GM12878 (cell line): ENCODE measurements at regions of chr2 and their contacts with region 1.

Region 1: GRCh38 chr2:196182439-196183171 is 11.2 kb upstream of the STK17B start:
- DNase-seq: peak; percentile 71
- ATAC-seq: peak; percentile 87
- H3K4me3 ChIP-seq: no peak overlapping the region
- H3K27ac ChIP-seq: peak overlapping the region; percentile 42
- H3K4me1 ChIP-seq: peaks cover 27% of the 10 kb centered on the region
- H3K27me3 ChIP-seq: no peaks in the 10 kb centered on the region
- CTCF ChIP-seq: no peak
- EP300 ChIP-seq: peak; percentile 31 to 64
- POLR2A ChIP-seq: no peak
- RAD21 ChIP-seq: no peak

Region 2: GRCh38 chr2:196205881-196206435 is 23.4 kb after region 1 on chr2:
- CTCF ChIA-PET with region 1: interaction called, 13 read pairs
- POLR2A ChIA-PET with region 1: interaction called, 22 read pairs
- RAD21 ChIA-PET with region 1: interaction called, 39 read pairs
- SMC1A ChIA-PET with region 1: interaction called, 104 read pairs
- in situ Hi-C with region 1: no loop called
- intact Hi-C with region 1: loop called (anchors 2 kb)
- DNase-seq: no peak
- ATAC-seq: no peak
- H3K4me3 ChIP-seq: no peak overlapping the region
- H3K27ac ChIP-seq: no peak overlapping the region
- H3K4me1 ChIP-seq: peaks cover 22% of the 10 kb centered on the region
- H3K27me3 ChIP-seq: no peaks in the 10 kb centered on the region
- CTCF ChIP-seq: no peak
- EP300 ChIP-seq: no peak
- POLR2A ChIP-seq: no peak
- RAD21 ChIP-seq: no peak

Region 3: DNA sequence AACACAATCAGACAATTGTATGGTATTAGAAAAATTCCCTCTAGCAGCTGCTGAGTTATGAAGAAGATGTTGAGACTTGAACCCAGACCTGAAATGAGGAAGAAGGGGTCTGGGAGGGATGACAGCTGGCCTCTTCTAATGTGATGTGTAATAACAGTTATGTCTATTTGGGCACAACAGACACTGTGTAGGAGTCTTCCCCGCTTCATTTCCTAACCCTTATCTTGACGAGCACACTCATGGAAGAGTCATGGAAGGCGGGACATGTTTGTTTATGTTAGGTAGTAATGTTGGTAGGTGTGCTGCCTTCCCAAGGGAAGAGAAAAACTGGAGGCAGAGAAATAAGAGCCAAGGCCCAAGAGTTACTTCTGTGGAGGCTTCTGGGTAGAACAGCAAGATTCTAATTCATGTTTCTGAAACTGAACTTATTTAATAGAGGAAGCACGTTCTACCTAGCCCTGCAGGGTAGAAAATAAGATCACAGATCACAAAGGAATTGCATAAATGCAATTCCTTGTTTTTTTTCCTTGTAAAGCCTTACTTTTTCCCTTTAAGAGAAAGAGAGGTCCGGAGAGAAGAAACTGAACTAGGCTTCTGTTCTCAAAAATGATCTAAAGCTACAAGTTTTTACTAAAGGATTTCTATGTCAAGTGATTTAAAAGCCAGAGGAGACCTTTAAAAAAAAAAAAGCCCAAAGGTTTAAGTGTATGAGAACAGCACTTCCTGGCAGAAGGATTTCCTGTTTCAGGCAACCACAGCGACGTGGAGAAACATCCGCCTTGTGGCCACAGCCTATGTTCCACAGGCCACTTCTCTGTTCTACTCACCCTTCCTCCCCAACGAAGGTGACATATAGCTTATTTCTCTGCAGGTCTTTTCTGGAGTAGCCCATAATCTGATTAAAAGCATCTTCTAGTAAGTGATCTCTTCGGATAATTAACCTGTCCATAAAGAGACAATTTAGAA is 57.3 kb after region 1 on chr2:
- CTCF ChIA-PET with region 1: interaction called, 25 read pairs
- POLR2A ChIA-PET with region 1: interaction called, 26 read pairs
- RAD21 ChIA-PET with region 1: interaction called, 89 read pairs
- SMC1A ChIA-PET with region 1: interaction called, 143 read pairs
- in situ Hi-C with region 1: no loop called
- intact Hi-C with region 1: no loop called
- DNase-seq: peak; percentile 86
- ATAC-seq: peak; percentile 79
- H3K4me3 ChIP-seq: no peak overlapping the region
- H3K27ac ChIP-seq: peak overlapping the region; percentile 75
- H3K4me1 ChIP-seq: peaks cover 36% of the 10 kb centered on the region
- H3K27me3 ChIP-seq: no peaks in the 10 kb centered on the region
- CTCF ChIP-seq: 0 out of 6 replicates have a peak, but pooled peaks of 1 of the 3 experiments have one; percentile 3
- EP300 ChIP-seq: peak; percentile 74 to 85
- POLR2A ChIP-seq: no peak
- RAD21 ChIP-seq: 0 out of 2 replicates have a peak, but pooled peaks have one; percentile 19

Region 4: DNA sequence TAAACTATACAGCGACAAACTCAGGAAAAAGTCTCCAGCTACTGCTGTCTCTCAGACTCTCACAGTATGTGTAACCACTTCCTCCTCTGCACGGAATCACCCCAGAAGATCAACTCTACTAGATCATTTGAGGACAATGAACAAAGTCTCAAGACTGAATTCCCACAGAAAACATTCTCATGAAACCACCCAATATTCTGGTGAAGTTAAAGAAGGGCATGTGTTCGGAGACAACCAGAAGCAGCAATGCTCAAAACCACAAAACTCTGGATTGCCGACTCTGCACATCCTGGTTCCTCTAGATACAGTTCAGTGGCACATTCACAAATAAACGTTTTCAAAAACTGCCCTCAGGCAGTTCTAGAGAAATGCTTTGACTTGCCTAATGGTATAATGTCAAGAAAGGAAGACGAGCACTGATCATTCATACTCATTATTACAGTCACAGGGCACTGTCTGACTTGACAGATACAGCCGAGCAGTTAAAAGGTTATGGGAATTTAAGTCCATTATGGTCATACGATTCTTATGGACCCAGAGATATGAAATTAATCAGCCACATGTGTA is 80.7 kb after region 1 on chr2:
- CTCF ChIA-PET with region 1: interaction called, 3 read pairs
- POLR2A ChIA-PET with region 1: interaction called, 3 read pairs
- RAD21 ChIA-PET with region 1: interaction called, 13 read pairs
- SMC1A ChIA-PET with region 1: interaction called, 25 read pairs
- in situ Hi-C with region 1: no loop called
- intact Hi-C with region 1: loop called (anchors 2 kb)
- DNase-seq: peak; percentile 88
- ATAC-seq: peak; percentile 94
- H3K4me3 ChIP-seq: 0 out of 2 replicates have a peak overlapping the region, but pooled peaks have one; percentile 7
- H3K27ac ChIP-seq: peak overlapping the region; percentile 75
- H3K4me1 ChIP-seq: peaks cover 9% of the 10 kb centered on the region
- H3K27me3 ChIP-seq: no peaks in the 10 kb centered on the region
- CTCF ChIP-seq: no peak
- EP300 ChIP-seq: peak; percentile 20 to 52; a peak in 2 of 4 replicates
- POLR2A ChIP-seq: 0 out of 2 replicates have a peak, but pooled peaks have one; percentile 31
- RAD21 ChIP-seq: no peak